CD4-positive, alpha-beta T cell (primary cell): ENCODE measurements at regions of chr16 and their contacts with region 1.

Region 1: GRCh38 chr16:46908540-46909372 is 24.6 kb downstream of the GPT2 start:
- DNase-seq: peak; percentile 33 to 79 (median 54)
- ATAC-seq: peak; percentile 44
- H3K4me3 ChIP-seq: no peak overlapping the region
- H3K4me3 Mint-ChIP-seq: no peak overlapping the region
- H3K27ac ChIP-seq: no peak overlapping the region
- H3K27ac Mint-ChIP-seq: no peak overlapping the region
- H3K4me1 ChIP-seq: no peaks in the 10 kb centered on the region
- H3K4me1 Mint-ChIP-seq: no peaks in the 10 kb centered on the region
- H3K27me3 ChIP-seq: no peaks in the 10 kb centered on the region
- H3K27me3 Mint-ChIP-seq: no peaks in the 10 kb centered on the region
- CTCF ChIP-seq: peak; percentile 89

Region 2: GRCh38 chr16:46555951-46556350 is 352.8 kb before region 1 on chr16:
- CTCF ChIA-PET with region 1: no interaction called
- POLR2A ChIA-PET with region 1: no interaction called
- intact Hi-C with region 1: loop called (anchors 5 kb)
- DNase-seq: no peak
- ATAC-seq: no peak
- H3K4me3 ChIP-seq: no peak overlapping the region
- H3K4me3 Mint-ChIP-seq: no peak overlapping the region
- H3K27ac ChIP-seq: no peak overlapping the region
- H3K27ac Mint-ChIP-seq: no peak overlapping the region
- H3K4me1 ChIP-seq: no peaks in the 10 kb centered on the region
- H3K4me1 Mint-ChIP-seq: no peaks in the 10 kb centered on the region
- H3K27me3 ChIP-seq: peaks cover 0 to 4% of the 10 kb centered on the region in 2 experiments
- H3K27me3 Mint-ChIP-seq: peaks cover 20% of the 10 kb centered on the region
- CTCF ChIP-seq: no peak

Region 3: GRCh38 chr16:46673320-46674013 is 235.3 kb before region 1 on chr16:
- CTCF ChIA-PET with region 1: interaction called, 10 read pairs
- POLR2A ChIA-PET with region 1: no interaction called
- intact Hi-C with region 1: loop called (anchors 1 kb)
- DNase-seq: peak in 12 of 14 experiments; percentile 6 to 79 (median 28)
- ATAC-seq: peak; percentile 94
- H3K4me3 ChIP-seq: no peak overlapping the region
- H3K4me3 Mint-ChIP-seq: no peak overlapping the region
- H3K27ac ChIP-seq: no peak overlapping the region
- H3K27ac Mint-ChIP-seq: peak overlapping the region; percentile 6
- H3K4me1 ChIP-seq: no peaks in the 10 kb centered on the region
- H3K4me1 Mint-ChIP-seq: no peaks in the 10 kb centered on the region
- H3K27me3 ChIP-seq: no peaks in the 10 kb centered on the region
- H3K27me3 Mint-ChIP-seq: no peaks in the 10 kb centered on the region
- CTCF ChIP-seq: peak; percentile 78

Region 4: GRCh38 chr16:46853713-46854443 is 54.9 kb before region 1 on chr16:
- CTCF ChIA-PET with region 1: interaction called, 20 read pairs
- POLR2A ChIA-PET with region 1: no interaction called
- intact Hi-C with region 1: loop called (anchors 1 kb)
- DNase-seq: peak; percentile 30 to 74 (median 52)
- ATAC-seq: no peak
- H3K4me3 ChIP-seq: no peak overlapping the region
- H3K4me3 Mint-ChIP-seq: no peak overlapping the region
- H3K27ac ChIP-seq: no peak overlapping the region
- H3K27ac Mint-ChIP-seq: no peak overlapping the region
- H3K4me1 ChIP-seq: no peaks in the 10 kb centered on the region
- H3K4me1 Mint-ChIP-seq: no peaks in the 10 kb centered on the region
- H3K27me3 ChIP-seq: no peaks in the 10 kb centered on the region
- H3K27me3 Mint-ChIP-seq: peaks cover 3% of the 10 kb centered on the region
- CTCF ChIP-seq: peak; percentile 61